ENCODE measurements at regions of chr2 and their contacts with region 1.

Region 1: DNA sequence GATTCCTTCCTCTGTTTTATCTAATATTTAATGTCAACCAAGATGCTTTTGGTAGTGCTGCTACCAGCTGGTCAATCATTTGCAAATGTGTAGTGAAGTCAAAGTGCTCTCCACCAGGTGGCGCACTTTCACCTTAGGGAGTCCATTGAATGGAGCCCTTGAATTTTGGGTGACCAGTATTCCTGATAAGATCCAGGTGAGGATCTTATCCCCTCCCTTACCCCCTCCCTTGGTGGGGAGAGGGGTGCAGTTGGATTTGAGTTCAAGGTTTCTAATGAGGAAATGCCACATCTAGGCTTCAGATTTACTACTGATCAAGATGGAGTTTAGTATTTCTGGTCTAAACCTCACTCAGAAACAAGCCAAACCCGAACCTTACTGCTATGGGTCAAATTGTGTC is 12.0 kb upstream of the E2F6 start:
- DNase-seq: peak; percentile 40
- H3K4me3 ChIP-seq: no peak overlapping the region
- CTCF ChIP-seq: peak; percentile 74

Region 2: GRCh38 chr2:11430729-11431128 is 47.3 kb before region 1 on chr2:
- CTCF ChIA-PET with region 1: no interaction called
- POLR2A ChIA-PET with region 1: no interaction called
- DNase-seq: no peak
- H3K4me3 ChIP-seq: no peak overlapping the region
- CTCF ChIP-seq: no peak

Region 3: DNA sequence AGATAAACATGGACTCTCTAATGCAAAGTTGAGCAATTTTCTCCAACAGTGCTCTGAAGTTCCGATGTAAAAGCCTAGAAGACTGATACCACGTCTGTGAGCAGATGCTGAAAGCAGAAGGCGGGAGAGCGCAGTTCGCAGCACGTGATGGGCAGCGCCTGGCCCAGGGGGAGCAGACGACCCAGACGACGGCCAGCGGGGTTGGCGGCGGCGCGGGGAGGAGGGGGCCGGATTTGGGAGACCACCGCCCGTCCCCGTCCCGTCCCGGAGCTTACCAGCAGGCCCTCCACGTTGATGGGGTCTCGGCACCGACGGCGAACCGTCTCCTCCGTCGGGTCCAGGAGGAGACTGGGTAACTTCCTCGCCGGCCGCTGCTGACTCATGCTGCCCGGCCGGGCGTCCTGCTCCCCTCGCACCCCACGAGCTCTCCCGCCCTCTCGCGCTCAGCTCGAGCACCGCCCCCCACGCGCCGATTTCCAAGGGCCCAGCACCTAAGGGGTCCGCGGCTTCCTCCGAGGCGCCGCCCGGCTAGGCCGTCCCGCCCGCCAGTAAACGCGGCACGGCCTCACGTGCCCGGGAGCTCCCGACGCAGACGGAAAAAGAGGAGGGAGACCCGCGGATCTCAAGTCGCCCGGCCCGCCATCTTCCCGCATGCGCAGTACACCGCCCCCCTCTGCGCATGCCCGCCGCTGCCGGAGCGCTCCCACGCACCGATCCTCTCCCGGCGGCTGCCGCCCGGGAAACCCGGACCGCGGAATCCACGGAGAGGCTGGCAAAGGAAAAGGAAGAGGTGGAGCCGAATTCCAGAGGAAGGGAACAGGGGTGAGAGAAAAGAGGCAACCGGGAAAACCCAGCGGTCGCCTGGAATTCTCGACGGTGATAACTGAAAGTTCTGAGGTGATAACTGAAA is 12.2 kb before region 1 on chr2 and contains the start of gene E2F6:
- CTCF ChIA-PET with region 1: interaction called, 14 read pairs
- POLR2A ChIA-PET with region 1: interaction called, 4 read pairs
- DNase-seq: peak; percentile 49
- H3K4me3 ChIP-seq: peak within 1 kb of the TSS; percentile 74
- CTCF ChIP-seq: no peak

Region 4: GRCh38 chr2:11488809-11489208 is 10.8 kb after region 1 on chr2:
- CTCF ChIA-PET with region 1: interaction called, 17 read pairs
- POLR2A ChIA-PET with region 1: no interaction called
- DNase-seq: no peak
- H3K4me3 ChIP-seq: no peak overlapping the region
- CTCF ChIP-seq: no peak

Region 5: DNA sequence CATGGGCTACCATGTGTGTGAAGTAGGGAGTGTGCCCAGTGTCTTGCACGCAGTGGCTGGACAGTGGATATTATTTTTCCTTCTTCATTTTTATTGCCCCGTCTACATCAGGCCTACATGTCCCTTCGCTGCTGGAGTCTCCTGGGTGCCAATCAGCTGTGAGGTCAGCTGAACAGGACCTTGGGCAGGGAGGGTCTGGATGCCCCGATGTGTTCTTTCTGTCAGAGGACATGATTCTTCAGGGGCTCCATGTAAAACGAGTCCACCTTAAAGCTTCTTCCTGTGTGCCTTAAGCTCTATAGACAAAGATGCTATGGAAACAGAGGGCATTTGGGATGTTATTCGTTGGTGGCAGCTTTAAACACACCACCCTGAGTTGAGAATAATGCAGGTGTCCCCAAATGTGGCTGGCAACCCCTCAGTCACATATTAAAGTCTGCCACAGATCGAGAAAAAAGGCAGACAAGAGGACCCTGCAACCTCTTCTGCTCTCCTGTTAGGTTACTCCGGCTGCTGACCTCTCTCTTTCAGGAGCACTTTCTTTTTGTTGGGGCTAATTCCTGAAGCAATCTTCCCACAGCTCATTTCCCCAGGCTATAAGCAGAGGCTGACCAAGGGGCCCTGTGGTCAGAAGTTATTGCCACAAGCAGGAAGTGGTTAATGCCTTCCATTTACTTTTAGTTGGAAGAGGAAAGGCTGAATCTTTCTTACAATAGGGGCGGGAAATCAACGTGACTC is 75.8 kb after region 1 on chr2:
- CTCF ChIA-PET with region 1: interaction called, 10 read pairs
- POLR2A ChIA-PET with region 1: no interaction called
- DNase-seq: no peak
- H3K4me3 ChIP-seq: no peak overlapping the region
- CTCF ChIP-seq: no peak